A549 (cell line): ENCODE measurements at regions of chr14 and their contacts with region 1.

Region 1: GRCh38 chr14:96275177-96276112 is 19.4 kb downstream of the BDKRB1 start:
- DNase-seq: peak; percentile 67 to 76
- ATAC-seq: peak; percentile 77 to 80
- H3K4me3 ChIP-seq: no peak overlapping the region
- H3K27ac ChIP-seq: peak overlapping the region; percentile 69 to 92
- H3K4me1 ChIP-seq: peaks cover 39% of the 10 kb centered on the region
- CTCF ChIP-seq: peak; percentile 98
- EP300 ChIP-seq: no peak
- POLR2A ChIP-seq: no peak
- RAD21 ChIP-seq: peak; percentile 99

Region 2: DNA sequence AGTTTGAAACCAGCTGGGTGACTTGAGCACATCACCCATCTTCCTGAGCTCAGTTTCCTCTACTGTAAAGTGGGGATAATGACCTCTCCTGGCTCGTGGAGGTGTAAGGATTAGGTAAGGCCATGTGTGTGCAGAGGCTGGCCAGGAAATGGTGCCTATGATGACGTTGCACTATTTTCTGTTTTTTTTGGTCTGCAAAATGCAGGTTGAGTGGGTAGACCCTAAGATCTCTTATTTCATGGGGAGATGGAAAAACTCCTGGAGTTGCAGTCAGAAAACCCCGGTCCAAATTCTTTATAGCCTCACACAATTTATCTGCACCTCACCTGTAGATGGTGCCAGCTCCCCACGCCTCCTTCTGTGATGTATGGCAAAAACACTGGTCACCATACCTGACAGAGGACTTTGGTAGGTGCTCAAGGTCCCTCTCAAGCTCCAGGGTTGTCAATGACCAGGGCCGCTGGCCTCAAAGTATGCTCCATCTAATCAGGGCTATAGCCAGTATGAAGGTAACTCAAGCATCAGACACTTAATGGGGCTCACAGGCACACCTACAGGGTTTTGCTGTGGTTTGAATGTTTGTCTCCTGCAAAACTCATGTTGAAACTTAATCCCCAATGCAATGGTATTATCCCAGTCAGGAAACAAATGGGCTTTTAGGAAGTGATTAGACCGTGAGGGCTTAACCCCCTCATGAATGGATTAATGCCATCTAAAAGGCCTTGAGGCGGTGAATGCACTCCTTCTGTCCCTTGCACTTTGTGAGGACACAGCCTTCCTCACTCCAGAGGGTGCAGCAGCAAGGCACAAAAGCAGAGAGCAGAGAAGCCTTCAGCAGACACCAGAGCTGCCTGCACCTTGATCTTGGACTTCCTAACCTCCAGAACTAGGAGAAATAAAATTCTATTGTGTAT is 218.7 kb before region 1 on chr14:
- CTCF ChIA-PET with region 1: interaction called, 10 read pairs
- POLR2A ChIA-PET with region 1: no interaction called
- DNase-seq: no peak
- ATAC-seq: 0 out of 6 replicates have a peak, but pooled peaks of 1 of the 2 experiments have one; percentile 19
- H3K4me3 ChIP-seq: no peak overlapping the region
- H3K27ac ChIP-seq: no peak overlapping the region
- H3K4me1 ChIP-seq: peaks cover 18% of the 10 kb centered on the region; the same call in 2 of the 3 replicates
- CTCF ChIP-seq: peak; percentile 50; the same call in 2 of the 3 replicates
- EP300 ChIP-seq: no peak
- POLR2A ChIP-seq: no peak
- RAD21 ChIP-seq: peak; percentile 63 to 66

Region 3: GRCh38 chr14:96204151-96205058 is 71.0 kb before region 1 on chr14 and contains the start of gene BDKRB2:
- CTCF ChIA-PET with region 1: interaction called, 18 read pairs
- POLR2A ChIA-PET with region 1: interaction called, 4 read pairs
- DNase-seq: peak; percentile 76 to 94
- ATAC-seq: peak; percentile 94 to 96
- H3K4me3 ChIP-seq: peak within 1 kb of the TSS; percentile 76
- H3K27ac ChIP-seq: peak within 1 kb of the TSS; percentile 85 to 88
- H3K4me1 ChIP-seq: peaks cover 40% of the 10 kb centered on the region
- CTCF ChIP-seq: no peak
- EP300 ChIP-seq: peak in 1 of 2 experiments; percentile 43; a peak in 2 of 5 replicates
- POLR2A ChIP-seq: peak; percentile 43
- RAD21 ChIP-seq: peak in 1 of 2 experiments; percentile 49; a peak in 3 of 5 replicates
- polyA plus RNA-seq, gene BDKRB2: 21.6 and 26.6 TPM in 2 replicates

Region 4: DNA sequence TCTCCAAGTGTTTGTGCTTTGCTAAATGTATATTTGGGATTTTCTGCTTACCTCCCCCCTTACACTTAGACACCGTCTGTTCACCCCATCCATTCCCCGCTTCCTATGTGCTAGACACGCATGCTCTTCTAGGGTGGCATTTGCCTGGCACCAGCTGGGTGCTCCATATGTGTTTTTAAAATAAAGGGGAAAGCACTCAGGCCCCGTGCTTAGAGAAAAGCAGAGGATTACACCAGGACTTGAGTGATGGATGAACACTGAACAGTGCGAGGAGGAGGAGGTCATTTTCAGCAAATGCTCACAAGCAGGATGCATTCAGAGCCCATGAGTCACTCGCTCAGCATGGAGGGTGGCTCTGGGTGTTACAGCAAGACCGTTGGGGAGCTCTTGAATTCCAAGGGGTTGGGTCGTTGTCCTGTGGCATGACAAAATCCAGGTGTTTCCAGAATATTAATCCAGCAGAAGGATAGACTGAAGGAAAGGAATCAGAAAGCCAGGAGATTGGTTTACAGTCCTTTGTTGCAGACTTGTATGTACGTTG is 22.4 kb before region 1 on chr14:
- CTCF ChIA-PET with region 1: interaction called, 66 read pairs
- POLR2A ChIA-PET with region 1: no interaction called
- DNase-seq: peak; percentile 64 to 69
- ATAC-seq: peak; percentile 67 to 86; a peak in 4 of 6 replicates
- H3K4me3 ChIP-seq: no peak overlapping the region
- H3K27ac ChIP-seq: peak overlapping the region; percentile 72 to 91
- H3K4me1 ChIP-seq: peaks cover 64% of the 10 kb centered on the region
- CTCF ChIP-seq: no peak
- EP300 ChIP-seq: peak in 1 of 2 experiments; percentile 44; a peak in 2 of 5 replicates
- POLR2A ChIP-seq: no peak
- RAD21 ChIP-seq: no peak

Region 5: DNA sequence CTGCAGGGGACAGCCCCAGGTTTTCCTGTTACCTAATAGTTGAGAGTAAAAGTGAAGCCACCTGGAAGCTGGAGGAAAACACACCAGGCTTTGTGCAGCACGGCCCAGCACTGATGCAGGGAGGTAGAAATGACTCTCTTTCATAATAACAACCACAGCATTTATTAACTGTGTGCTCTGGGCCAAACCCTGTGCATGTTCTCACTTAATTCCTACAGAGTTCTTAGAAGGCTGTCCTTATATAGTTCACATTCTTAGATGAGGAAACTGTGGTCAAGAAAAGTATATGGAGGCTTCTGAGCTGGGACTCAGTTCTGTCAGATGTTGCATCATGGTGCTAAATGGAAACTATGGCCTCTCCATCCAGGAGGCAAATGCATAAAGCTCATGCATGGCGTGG is 326.7 kb after region 1 on chr14:
- CTCF ChIA-PET with region 1: no interaction called
- POLR2A ChIA-PET with region 1: no interaction called
- DNase-seq: no peak
- ATAC-seq: no peak
- H3K4me3 ChIP-seq: no peak overlapping the region
- H3K27ac ChIP-seq: no peak overlapping the region
- H3K4me1 ChIP-seq: no peaks in the 10 kb centered on the region
- CTCF ChIP-seq: no peak
- EP300 ChIP-seq: no peak
- POLR2A ChIP-seq: no peak
- RAD21 ChIP-seq: no peak